Calu3 (cell line): ENCODE measurements at regions of chr3 and their contacts with region 1.

Region 1: DNA sequence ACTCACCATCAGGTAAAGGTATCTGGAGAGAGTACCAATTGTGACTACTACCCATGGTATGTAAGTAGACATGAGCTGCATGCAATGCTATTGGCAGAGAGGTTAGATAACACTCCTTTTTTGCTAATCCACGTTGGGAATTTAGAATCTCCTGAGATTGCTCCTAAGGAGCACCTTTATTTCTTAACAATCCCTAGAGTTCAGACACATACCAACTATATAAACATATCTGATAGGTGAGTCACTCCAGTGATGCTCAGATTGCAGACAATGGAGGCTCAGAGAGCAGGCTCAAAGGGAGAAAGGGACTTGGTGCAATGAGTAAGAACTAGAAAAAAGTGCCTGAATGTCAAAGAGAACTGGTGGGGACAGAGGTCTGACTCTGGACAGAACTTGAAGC is 47.0 kb upstream of the LRRFIP2 start:
- DNase-seq: peak; percentile 57
- H3K4me3 Mint-ChIP-seq: no peak overlapping the region
- H3K27ac Mint-ChIP-seq: peak overlapping the region; percentile 45
- H3K4me1 Mint-ChIP-seq: peaks cover 34% of the 10 kb centered on the region
- H3K27me3 Mint-ChIP-seq: no peaks in the 10 kb centered on the region
- CTCF ChIP-seq: no peak

Region 2: GRCh38 chr3:37183375-37183841 is 38.0 kb before region 1 on chr3:
- CTCF ChIA-PET with region 1: interaction called, 5 read pairs
- intact Hi-C with region 1: loop called (anchors 2 kb)
- DNase-seq: peak; percentile 37
- H3K4me3 Mint-ChIP-seq: no peak overlapping the region
- H3K27ac Mint-ChIP-seq: peak overlapping the region; percentile 60
- H3K4me1 Mint-ChIP-seq: peaks cover 26% of the 10 kb centered on the region
- H3K27me3 Mint-ChIP-seq: no peaks in the 10 kb centered on the region
- CTCF ChIP-seq: no peak

Region 3: DNA sequence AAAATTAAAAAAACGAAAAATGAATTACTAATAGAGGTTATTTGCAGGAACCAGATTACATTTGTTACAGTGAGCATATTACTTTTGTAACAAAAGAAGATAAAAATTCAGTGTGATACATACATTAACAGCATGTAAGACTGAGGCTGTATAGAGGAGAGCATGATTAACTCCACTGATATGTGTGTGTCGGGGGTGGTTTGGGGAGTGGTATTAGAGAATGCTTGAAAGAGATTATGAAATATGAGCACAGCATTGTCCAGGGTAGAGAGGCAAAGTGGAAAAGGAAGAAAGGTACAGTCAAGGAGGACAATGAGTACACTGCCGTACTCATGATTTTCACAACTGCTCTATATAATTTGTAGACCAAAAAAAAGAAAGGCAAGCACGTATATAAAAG is 15.8 kb after region 1 on chr3:
- CTCF ChIA-PET with region 1: no interaction called
- intact Hi-C with region 1: no loop called
- DNase-seq: no peak
- H3K4me3 Mint-ChIP-seq: no peak overlapping the region
- H3K27ac Mint-ChIP-seq: no peak overlapping the region
- H3K4me1 Mint-ChIP-seq: peaks cover 10% of the 10 kb centered on the region
- H3K27me3 Mint-ChIP-seq: no peaks in the 10 kb centered on the region
- CTCF ChIP-seq: no peak